Right ventricle myocardium inferior (tissue), 1 donor: ENCODE measurements at regions of chr1 and their contacts with region 1.

Region 1: DNA sequence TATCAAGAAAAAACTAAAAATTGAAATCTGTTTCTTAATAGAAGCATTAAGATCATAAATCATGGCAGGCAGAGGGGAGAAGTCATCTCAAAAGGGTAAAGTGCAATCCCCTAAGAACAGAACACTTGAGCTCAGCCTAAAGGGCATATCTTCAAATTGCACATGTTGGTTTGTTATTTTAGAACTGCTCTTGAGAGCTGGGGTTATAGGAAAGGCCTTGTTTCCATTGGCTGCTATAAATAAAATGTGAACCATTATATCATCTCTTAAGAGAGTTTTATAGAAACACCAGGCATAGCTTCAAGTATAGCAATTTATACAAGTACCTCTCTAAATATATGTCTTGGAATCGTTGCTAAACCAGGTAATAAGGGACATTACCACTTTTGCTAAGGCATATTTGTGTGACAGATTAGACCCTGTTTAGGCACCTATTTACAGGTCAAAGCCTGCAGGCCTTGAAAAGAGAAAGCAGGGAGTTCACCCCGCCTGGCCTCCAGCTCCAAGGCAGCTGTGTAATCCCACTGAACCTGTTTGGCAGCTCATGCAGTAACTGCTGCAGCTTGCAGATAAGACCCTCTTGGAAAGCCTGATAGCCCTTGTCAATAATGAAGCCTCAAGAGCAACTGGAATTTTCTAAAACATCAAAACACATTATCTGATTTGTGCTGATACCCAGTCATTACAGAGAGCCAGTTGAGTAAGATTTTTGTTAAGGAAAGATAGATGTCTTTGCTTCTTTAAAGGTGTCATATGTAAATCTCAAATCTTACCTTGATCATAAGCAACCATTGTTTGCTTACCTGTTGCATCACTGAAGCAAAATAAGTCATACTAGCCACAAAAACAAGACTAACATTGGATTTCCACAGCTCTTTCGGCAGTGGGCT is 24.2 kb upstream of the SYDE2 start:
- DNase-seq: no peak
- ATAC-seq: peak; percentile 74

Region 2: DNA sequence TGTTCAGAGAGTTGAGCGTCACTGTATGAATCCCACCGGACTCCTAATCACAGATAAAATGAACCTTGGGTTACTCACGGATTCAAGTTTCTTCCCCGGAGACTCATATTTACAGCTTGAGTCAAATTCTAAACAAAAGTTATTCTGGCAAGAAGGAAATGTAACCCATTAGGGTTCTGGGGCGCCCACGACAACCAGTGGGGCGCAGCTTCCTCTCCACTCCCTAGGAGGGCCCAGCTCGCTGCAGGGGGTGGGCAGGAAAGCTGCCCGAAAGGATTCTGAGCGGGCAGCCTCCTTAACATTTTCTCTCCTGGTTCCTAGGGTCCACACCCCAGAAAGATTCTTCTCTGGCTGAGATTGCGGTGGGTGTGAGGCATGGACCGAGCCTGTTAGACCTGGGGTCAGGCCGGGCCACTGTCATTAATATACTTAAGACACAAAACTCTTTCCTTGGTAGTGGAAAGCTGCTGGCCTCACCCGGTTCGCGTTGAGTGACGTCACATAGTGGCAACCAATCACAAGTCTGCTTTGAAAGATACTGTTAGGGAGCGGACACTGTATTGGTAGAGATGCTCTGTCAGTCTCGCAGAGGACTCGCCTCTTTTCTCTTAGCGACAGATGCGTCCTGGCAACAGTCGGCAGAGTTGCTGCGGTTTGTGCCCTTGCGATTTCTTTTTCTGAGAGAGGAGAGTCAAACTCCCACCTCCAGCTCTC is 163.1 kb before region 1 on chr1:
- intact Hi-C with region 1: no loop called
- DNase-seq: peak; percentile 85
- ATAC-seq: peak; percentile 99

Region 3: DNA sequence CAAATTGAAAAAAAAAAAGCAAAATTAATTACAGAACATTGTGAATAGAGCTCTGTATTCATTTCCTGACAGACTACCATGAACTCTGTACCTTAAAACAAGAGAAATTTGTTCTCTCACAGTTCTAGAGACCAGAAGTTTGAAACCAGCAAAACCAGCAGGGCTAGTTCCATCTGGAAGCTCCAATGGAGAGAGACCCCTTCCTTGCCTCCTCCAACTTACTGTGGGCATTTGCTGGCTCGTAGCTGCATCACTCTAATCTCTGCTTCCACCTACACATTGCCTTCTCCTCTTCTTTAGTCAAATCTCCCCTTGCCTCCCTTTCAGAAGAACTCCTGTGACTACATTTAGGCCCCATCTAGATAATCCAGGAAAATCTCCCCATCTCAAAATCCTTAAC is 80.6 kb before region 1 on chr1:
- intact Hi-C with region 1: loop called (anchors 5 kb)
- DNase-seq: no peak
- ATAC-seq: no peak